Activated naive CD4-positive, alpha-beta T cell treated with anti-CD3 and anti-CD28 coated beads for 36 hours (primary cell): ENCODE measurements at regions of chr18 and their contacts with region 1.

Region 1: DNA sequence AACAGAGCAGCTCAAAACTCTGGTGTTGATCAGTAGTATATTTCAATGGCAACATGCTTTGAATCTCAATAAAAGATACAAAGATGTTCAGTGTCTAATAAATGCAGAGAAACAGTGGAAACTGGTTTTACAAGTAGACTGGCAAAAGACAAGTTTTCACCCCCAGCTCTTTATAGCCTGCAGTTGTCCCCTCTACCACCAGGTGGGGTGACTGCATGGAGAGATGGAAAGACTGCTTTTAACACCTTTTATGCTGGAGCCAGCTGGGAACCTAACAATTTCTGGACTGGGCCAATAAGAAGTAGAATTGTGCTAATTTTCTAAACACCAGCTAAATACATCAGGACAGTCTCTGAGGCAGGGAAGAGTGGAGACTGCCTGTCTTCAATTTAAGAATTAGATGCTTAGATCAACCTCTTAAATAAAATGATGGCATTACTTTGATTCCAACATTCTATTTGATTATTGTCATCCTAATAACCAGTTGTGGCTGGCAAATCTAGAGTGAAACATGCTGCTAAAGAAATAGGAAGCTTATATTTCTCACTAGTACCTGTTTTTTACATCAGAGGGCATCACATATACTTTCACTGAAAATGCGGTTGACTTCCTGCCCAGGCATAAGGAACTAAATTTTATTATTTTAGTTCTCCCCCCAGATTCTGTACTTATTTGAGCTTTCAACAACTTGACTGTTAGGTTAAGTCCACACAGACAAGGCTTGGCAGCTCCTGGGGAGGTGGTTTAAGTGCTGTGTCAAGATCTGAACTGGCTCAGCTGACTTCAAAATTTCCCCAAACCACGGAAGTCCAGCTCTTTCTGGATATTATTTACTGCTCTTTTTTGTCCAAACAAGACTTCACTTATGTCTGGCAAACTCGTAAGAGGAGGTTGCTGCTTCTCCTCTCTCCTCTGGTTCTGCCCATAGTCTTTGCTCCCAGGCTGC is 140.5 kb downstream of the TPGS2 start:
- DNase-seq: peak; percentile 69
- H3K4me3 Mint-ChIP-seq: no peak overlapping the region
- H3K27ac Mint-ChIP-seq: no peak overlapping the region
- H3K4me1 Mint-ChIP-seq: no peaks in the 10 kb centered on the region
- H3K27me3 Mint-ChIP-seq: peaks cover 7% of the 10 kb centered on the region

Region 2: GRCh38 chr18:35923939-35924684 is 764.2 kb before region 1 on chr18:
- CTCF ChIA-PET with region 1: no interaction called
- intact Hi-C with region 1: no loop called
- DNase-seq: no peak
- H3K4me3 Mint-ChIP-seq: no peak overlapping the region
- H3K27ac Mint-ChIP-seq: no peak overlapping the region
- H3K4me1 Mint-ChIP-seq: no peaks in the 10 kb centered on the region
- H3K27me3 Mint-ChIP-seq: peaks cover 22% of the 10 kb centered on the region

Region 3: GRCh38 chr18:36757081-36757480 is 68.8 kb after region 1 on chr18:
- CTCF ChIA-PET with region 1: interaction called, 5 read pairs
- intact Hi-C with region 1: loop called (anchors 1 kb)
- DNase-seq: no peak
- H3K4me3 Mint-ChIP-seq: no peak overlapping the region
- H3K27ac Mint-ChIP-seq: no peak overlapping the region
- H3K4me1 Mint-ChIP-seq: no peaks in the 10 kb centered on the region
- H3K27me3 Mint-ChIP-seq: peaks cover 11% of the 10 kb centered on the region

Region 4: GRCh38 chr18:36809590-36810381 is 121.5 kb after region 1 on chr18:
- CTCF ChIA-PET with region 1: interaction called, 55 read pairs
- intact Hi-C with region 1: loop called (anchors 1 kb)
- DNase-seq: peak; percentile 28
- H3K4me3 Mint-ChIP-seq: no peak overlapping the region
- H3K27ac Mint-ChIP-seq: no peak overlapping the region
- H3K4me1 Mint-ChIP-seq: peaks cover 10% of the 10 kb centered on the region
- H3K27me3 Mint-ChIP-seq: no peaks in the 10 kb centered on the region

Region 5: DNA sequence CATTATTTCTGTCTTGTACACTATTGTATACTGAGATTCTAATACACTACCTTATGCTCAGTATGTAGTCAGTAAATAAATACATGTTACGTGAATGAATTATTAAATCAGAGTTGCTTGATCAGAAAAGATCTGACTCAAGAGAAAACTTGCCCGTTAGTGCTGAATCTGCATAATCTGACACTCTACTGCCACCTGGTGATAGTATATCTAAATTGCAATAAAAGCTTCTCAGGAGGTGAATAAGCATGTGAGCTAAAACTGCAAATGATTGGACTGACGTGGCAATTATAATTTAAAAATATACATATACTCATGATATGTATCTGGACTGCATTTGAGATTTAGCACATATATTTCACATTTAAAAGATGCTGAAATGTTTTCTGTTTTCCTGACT is 211.0 kb after region 1 on chr18:
- CTCF ChIA-PET with region 1: interaction called, 6 read pairs
- intact Hi-C with region 1: loop called (anchors 1 kb)
- DNase-seq: no peak
- H3K4me3 Mint-ChIP-seq: no peak overlapping the region
- H3K27ac Mint-ChIP-seq: no peak overlapping the region
- H3K4me1 Mint-ChIP-seq: peaks cover 3% of the 10 kb centered on the region
- H3K27me3 Mint-ChIP-seq: no peaks in the 10 kb centered on the region